Activated CD4-positive, alpha-beta memory T cell treated with anti-CD3 and anti-CD28 coated beads, Interleukin-2, amount 10 ng/mL, durations not matched to agents 7 days and 5 days (primary cell): ENCODE measurements at regions of chr2 and their contacts with region 1.

Region 1: GRCh38 chr2:118003396-118003824 is 10.5 kb downstream of the CCDC93 start:
- DNase-seq: peak; percentile 51
- H3K4me3 Mint-ChIP-seq: no peak overlapping the region
- H3K27ac Mint-ChIP-seq: peak overlapping the region; percentile 41
- H3K4me1 Mint-ChIP-seq: peaks cover 14% of the 10 kb centered on the region
- H3K27me3 Mint-ChIP-seq: no peaks in the 10 kb centered on the region

Region 2: DNA sequence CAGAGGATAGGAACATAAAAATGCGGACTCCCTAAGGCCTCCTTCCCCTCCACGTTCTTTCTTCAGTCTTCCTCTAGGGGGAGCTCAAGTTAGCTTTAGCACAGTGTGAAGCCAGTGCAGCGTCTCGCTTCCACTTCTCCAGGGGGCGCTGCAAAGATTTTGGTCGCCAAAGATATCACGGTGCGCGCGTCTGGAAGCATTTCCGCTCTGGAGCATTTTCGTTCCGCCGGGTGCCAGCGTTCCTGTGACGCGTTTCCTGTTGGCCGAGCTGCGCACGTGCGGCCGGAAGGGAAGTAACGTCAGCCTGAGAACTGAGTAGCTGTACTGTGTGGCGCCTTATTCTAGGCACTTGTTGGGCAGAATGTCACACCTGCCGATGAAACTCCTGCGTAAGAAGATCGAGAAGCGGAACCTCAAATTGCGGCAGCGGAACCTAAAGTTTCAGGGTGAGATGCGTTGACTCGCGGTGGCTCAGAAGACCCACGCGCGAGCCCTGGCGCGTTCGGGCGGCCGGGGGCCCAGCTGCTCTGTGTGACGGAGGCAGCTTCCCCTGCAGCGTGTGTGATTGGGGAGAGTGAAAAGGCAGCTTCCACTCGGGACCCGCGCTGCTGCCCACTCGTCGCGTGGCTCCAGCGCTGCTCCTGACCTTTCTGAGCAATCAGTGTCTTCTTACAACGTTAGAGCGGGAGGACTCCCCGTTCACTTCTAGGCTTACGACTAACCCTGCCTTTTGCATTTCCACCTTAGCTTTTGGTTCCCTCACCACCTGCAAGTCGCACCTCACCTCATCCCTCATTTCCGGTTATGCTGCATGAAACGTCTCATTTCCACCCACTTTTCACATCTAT is 188.8 kb before region 1 on chr2 and contains the start of gene DDX18:
- CTCF ChIA-PET with region 1: interaction called, 84 read pairs
- POLR2A ChIA-PET with region 1: interaction called, 19 read pairs
- DNase-seq: peak; percentile 97
- H3K4me3 Mint-ChIP-seq: peak within 1 kb of the TSS; percentile 89
- H3K27ac Mint-ChIP-seq: peak within 1 kb of the TSS; percentile 95
- H3K4me1 Mint-ChIP-seq: peaks cover 37% of the 10 kb centered on the region
- H3K27me3 Mint-ChIP-seq: no peaks in the 10 kb centered on the region
- total RNA-seq, gene DDX18: 58.6 to 70.9 TPM

Region 3: DNA sequence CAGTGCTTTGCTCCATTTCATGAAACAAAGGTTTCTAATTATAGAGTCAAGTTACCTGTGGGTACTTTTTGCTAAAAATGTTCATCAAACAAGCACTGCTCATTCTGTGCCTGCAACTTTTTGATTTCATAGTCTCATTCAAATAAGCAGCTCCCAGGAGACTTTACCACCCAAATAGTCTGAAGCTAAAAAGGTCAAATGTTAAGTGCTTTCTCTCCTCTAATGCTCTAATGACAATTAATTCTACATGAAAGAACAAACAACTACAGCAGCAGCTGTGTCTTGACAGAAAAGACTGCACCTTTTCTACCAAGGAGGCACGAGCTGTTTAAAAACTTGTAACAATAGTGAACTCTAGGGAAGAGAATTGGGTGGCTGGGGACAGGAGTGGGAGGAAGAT is 54.8 kb before region 1 on chr2:
- CTCF ChIA-PET with region 1: interaction called, 12 read pairs
- POLR2A ChIA-PET with region 1: no interaction called
- DNase-seq: no peak
- H3K4me3 Mint-ChIP-seq: no peak overlapping the region
- H3K27ac Mint-ChIP-seq: no peak overlapping the region
- H3K4me1 Mint-ChIP-seq: peaks cover 2% of the 10 kb centered on the region
- H3K27me3 Mint-ChIP-seq: no peaks in the 10 kb centered on the region

Region 4: GRCh38 chr2:117985092-117985491 is 18.3 kb before region 1 on chr2:
- CTCF ChIA-PET with region 1: interaction called, 73 read pairs
- POLR2A ChIA-PET with region 1: interaction called, 3 read pairs
- DNase-seq: no peak
- H3K4me3 Mint-ChIP-seq: no peak overlapping the region
- H3K27ac Mint-ChIP-seq: no peak overlapping the region
- H3K4me1 Mint-ChIP-seq: no peaks in the 10 kb centered on the region
- H3K27me3 Mint-ChIP-seq: no peaks in the 10 kb centered on the region

Region 5: GRCh38 chr2:118088051-118089024 is 84.9 kb after region 1 on chr2 and contains the start of gene INSIG2:
- CTCF ChIA-PET with region 1: interaction called, 10 read pairs
- POLR2A ChIA-PET with region 1: no interaction called
- DNase-seq: peak; percentile 94
- H3K4me3 Mint-ChIP-seq: peak within 1 kb of the TSS; percentile 92
- H3K27ac Mint-ChIP-seq: peak within 1 kb of the TSS; percentile 78
- H3K4me1 Mint-ChIP-seq: peaks cover 24% of the 10 kb centered on the region
- H3K27me3 Mint-ChIP-seq: peaks cover 13% of the 10 kb centered on the region
- total RNA-seq, gene INSIG2: 38.2 to 40.9 TPM

Region 6: DNA sequence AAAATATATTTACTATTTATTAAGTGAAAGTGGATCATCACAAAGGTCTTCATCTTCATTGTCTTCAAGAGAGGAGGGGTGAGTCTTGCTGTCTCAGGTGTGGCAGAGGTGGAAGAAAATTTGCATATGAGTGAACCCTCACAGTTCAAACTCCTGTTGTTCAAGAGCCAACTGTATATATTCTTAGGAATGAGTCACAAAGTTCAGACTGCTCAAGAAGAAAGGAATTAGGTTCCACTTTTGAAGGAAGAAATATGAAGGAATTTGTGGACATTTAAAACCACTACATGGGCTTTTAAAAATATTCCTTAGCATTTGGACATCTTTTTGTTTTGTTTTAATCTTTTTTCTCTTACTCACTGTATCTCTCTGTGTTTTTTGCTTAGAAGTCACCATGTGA is 297.4 kb after region 1 on chr2:
- CTCF ChIA-PET with region 1: no interaction called
- POLR2A ChIA-PET with region 1: no interaction called
- DNase-seq: no peak
- H3K4me3 Mint-ChIP-seq: no peak overlapping the region
- H3K27ac Mint-ChIP-seq: no peak overlapping the region
- H3K4me1 Mint-ChIP-seq: no peaks in the 10 kb centered on the region
- H3K27me3 Mint-ChIP-seq: peaks cover 26% of the 10 kb centered on the region